PC-9 (cell line): ENCODE measurements at regions of chr7 and their contacts with region 1.

Region 1: DNA sequence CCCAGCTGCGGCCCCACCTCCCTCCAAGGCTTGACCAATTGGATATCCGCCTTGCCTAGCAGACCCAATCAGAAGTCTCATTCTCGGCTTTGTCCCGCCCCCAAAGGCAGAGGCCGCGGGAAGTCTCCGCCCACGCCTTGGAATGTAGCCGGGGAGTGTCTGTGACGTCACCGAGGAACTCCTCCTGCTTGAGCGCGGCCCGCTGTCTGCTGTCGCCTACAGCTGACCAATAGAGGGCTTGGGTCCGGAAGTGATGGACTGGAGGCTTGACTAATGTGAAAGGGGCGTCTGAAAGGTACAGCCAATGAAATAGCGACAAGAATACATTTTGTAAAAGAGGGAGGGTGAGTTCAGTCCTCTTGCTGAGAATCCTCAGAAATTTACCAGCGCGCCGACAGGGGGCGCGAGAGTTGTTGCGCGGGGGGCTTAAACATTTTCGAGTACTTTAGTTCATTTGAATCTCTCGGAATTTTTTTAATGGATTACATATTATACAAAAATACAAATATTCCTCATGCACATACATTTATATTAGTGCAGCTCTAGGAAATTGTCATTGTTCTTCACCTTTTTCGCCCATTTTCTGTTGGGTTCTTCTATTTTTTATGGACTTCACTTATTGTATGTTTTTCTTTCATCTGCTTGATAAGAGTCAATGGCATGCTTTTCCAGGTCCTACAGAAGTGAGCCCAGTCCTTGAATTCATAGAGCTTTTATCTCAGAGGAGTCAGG is 376 bp upstream of the CREB3L2 start:
- DNase-seq: peak; percentile 99 to 100
- H3K4me3 ChIP-seq: peak overlapping the region; percentile 75
- H3K27ac ChIP-seq: peak overlapping the region; percentile 58
- H3K4me1 ChIP-seq: peaks cover 33% of the 10 kb centered on the region
- H3K27me3 ChIP-seq: no peaks in the 10 kb centered on the region
- CTCF ChIP-seq: peak; percentile 99

Region 2: GRCh38 chr7:137934941-137935883 is 67.0 kb before region 1 on chr7:
- CTCF ChIA-PET with region 1: no interaction called
- POLR2A ChIA-PET with region 1: no interaction called
- intact Hi-C with region 1: no loop called
- DNase-seq: no peak
- H3K4me3 ChIP-seq: no peak overlapping the region
- H3K27ac ChIP-seq: no peak overlapping the region
- H3K4me1 ChIP-seq: peaks cover 28% of the 10 kb centered on the region
- H3K27me3 ChIP-seq: no peaks in the 10 kb centered on the region
- CTCF ChIP-seq: no peak

Region 3: DNA sequence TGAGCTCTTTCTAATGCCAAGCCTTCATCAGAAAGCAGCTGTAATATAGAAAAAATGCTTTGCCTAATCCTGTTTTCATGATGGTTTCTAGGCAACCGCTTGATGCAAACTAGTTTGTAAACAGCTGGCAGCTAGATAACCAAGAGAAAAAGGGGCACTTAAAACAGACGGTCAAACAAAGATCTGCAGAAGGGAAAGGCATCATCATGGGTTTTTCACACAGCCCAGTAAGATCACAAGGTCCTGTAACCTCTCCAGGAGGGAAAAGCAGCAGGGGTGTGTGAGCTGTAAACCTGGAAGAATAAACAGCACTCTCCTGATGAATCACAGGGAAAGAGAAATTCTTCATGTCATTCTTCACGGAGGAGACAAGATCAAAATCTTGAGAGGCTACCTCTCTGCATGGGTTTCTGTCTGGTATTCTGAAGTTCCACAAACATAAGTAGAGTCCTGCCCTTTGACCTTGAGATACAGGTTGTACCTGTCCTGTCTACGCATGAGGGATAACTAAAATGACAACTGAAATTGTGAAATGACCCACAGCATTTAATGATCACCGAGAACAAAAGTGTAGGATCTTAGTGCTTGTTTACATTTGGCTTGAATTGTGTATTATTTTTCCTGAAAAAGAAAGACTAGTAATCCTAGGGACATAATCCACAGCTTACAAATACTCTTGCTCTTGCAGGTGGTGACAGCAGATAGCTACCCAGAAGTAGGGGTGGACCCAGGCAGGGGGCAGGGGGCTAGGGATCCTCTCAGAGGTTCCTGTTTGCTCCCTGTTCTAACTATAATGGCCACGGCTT is 48.4 kb before region 1 on chr7:
- CTCF ChIA-PET with region 1: interaction called, 5 read pairs
- POLR2A ChIA-PET with region 1: interaction called, 3 read pairs
- intact Hi-C with region 1: loop called (anchors 1 kb)
- DNase-seq: peak; percentile 65 to 99
- H3K4me3 ChIP-seq: peak overlapping the region; percentile 21; the same call in 1 of the 2 replicates
- H3K27ac ChIP-seq: peak overlapping the region; percentile 90
- H3K4me1 ChIP-seq: peaks cover 76% of the 10 kb centered on the region
- H3K27me3 ChIP-seq: no peaks in the 10 kb centered on the region
- CTCF ChIP-seq: no peak

Region 4: GRCh38 chr7:137978464-137979237 is 23.6 kb before region 1 on chr7:
- CTCF ChIA-PET with region 1: interaction called, 3 read pairs
- POLR2A ChIA-PET with region 1: no interaction called
- intact Hi-C with region 1: loop called (anchors 1 kb)
- DNase-seq: peak; percentile 83 to 97
- H3K4me3 ChIP-seq: peak overlapping the region; percentile 32; the same call in 1 of the 2 replicates
- H3K27ac ChIP-seq: peak overlapping the region; percentile 92
- H3K4me1 ChIP-seq: peaks cover 56% of the 10 kb centered on the region
- H3K27me3 ChIP-seq: no peaks in the 10 kb centered on the region
- CTCF ChIP-seq: no peak

Region 5: GRCh38 chr7:139043823-139044812 is 1041.9 kb after region 1 on chr7:
- CTCF ChIA-PET with region 1: no interaction called
- POLR2A ChIA-PET with region 1: no interaction called
- intact Hi-C with region 1: loop called (anchors 10 kb)
- DNase-seq: peak; percentile 88 to 91
- H3K4me3 ChIP-seq: peak overlapping the region; percentile 23; the same call in 1 of the 2 replicates
- H3K27ac ChIP-seq: peak overlapping the region; percentile 82
- H3K4me1 ChIP-seq: peaks cover 26% of the 10 kb centered on the region
- H3K27me3 ChIP-seq: no peaks in the 10 kb centered on the region
- CTCF ChIP-seq: no peak